ENCODE measurements at regions of chr17 and their contacts with region 1.

Region 1: GRCh38 chr17:75749545-75750389 is 15.2 kb downstream of the GALK1 start:
- DNase-seq: peak; percentile 68
- H3K4me3 Mint-ChIP-seq: no peak overlapping the region
- H3K27ac Mint-ChIP-seq: no peak overlapping the region
- H3K4me1 Mint-ChIP-seq: peaks cover 9% of the 10 kb centered on the region
- H3K27me3 Mint-ChIP-seq: no peaks in the 10 kb centered on the region
- CTCF ChIP-seq: peak; percentile 84

Region 2: DNA sequence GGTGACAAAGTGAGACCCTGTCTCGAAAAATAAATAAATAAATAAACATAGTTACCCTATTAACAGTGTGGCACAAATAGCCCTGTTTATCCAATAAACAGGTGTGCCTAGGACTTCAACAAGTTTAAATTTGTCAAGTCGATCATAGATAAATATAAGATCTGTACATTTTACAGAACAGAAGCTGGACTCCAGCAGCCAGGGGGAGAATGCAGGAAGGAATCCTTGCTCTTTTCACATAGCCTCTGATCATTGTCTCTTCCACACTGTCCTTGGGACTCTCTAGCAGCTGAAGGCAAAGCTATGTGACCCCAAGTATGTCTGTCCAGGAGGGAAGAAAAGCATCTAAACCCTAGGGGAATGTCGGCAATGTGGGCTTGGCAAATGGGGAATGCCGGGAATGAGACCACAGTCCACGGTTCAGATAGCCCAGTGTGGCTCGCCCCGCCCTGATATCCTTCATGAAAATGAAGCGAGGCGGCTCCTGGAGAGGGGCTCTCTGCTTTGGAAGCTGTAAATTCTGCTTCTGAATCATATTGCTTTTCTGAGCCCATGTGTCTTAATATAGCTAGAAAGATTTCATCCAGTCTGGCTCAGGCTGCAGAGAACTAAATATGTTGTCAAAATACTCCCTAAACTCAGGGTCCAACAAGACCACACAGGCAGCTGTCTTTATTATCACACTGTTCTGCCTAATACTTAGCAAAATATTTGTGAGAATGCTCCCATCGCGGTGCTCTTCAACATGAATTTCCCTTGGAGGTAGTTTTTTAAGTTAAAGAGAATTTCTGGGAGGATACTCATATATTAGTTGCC is 319.4 kb before region 1 on chr17:
- CTCF ChIA-PET with region 1: no interaction called
- POLR2A ChIA-PET with region 1: no interaction called
- intact Hi-C with region 1: loop called (anchors 5 kb)
- DNase-seq: no peak
- H3K4me3 Mint-ChIP-seq: no peak overlapping the region
- H3K27ac Mint-ChIP-seq: no peak overlapping the region
- H3K4me1 Mint-ChIP-seq: peaks cover 5% of the 10 kb centered on the region
- H3K27me3 Mint-ChIP-seq: no peaks in the 10 kb centered on the region
- CTCF ChIP-seq: no peak

Region 3: DNA sequence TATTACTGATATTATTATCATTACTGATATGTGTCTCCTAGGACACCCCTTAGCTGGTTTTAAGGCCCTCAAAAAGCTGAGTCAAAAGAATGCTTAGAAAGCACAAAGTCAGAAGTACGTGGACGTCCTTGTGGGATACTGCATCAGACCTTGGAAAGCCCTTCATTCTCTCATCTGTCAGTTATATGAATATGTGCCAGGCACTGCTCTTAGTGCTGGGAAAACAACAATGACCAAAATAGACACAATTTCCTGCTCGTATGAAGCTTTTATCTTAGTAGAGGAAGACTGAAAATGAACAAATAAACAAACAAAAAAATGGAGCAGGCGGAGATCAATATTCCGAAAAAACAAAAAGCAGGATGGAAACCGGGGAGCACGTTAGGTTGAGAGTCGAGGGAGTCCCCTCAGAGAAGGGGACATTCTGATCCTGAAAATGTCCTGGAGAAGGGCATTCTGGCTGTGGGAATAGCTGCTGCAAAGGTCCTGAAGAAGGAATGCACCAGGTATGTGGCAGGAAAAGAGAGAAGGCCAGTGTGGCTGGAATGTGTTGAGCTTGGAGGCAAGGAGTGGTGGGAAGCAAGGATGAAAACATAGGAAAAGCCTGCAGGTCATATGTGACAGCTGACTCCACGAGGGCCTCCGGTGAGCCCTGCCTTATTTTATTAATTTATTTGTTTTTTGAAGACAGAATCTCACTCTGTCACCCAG is 308.9 kb before region 1 on chr17:
- CTCF ChIA-PET with region 1: no interaction called
- POLR2A ChIA-PET with region 1: no interaction called
- intact Hi-C with region 1: no loop called
- DNase-seq: no peak
- H3K4me3 Mint-ChIP-seq: no peak overlapping the region
- H3K27ac Mint-ChIP-seq: peak overlapping the region; percentile 59
- H3K4me1 Mint-ChIP-seq: peaks cover 10% of the 10 kb centered on the region
- H3K27me3 Mint-ChIP-seq: no peaks in the 10 kb centered on the region
- CTCF ChIP-seq: no peak

Region 4: GRCh38 chr17:75673487-75673886 is 76.3 kb before region 1 on chr17:
- CTCF ChIA-PET with region 1: interaction called, 152 read pairs
- POLR2A ChIA-PET with region 1: interaction called, 109 read pairs
- intact Hi-C with region 1: loop called (anchors 1 kb)
- DNase-seq: no peak
- H3K4me3 Mint-ChIP-seq: no peak overlapping the region
- H3K27ac Mint-ChIP-seq: no peak overlapping the region
- H3K4me1 Mint-ChIP-seq: peaks cover 2% of the 10 kb centered on the region
- H3K27me3 Mint-ChIP-seq: no peaks in the 10 kb centered on the region
- CTCF ChIP-seq: no peak

Region 5: GRCh38 chr17:75693500-75694481 is 56.0 kb before region 1 on chr17:
- CTCF ChIA-PET with region 1: interaction called, 23 read pairs
- POLR2A ChIA-PET with region 1: interaction called, 5 read pairs
- intact Hi-C with region 1: no loop called
- DNase-seq: peak; percentile 99
- H3K4me3 Mint-ChIP-seq: peak overlapping the region; percentile 28
- H3K27ac Mint-ChIP-seq: peak overlapping the region; percentile 96
- H3K4me1 Mint-ChIP-seq: peaks cover 73% of the 10 kb centered on the region
- H3K27me3 Mint-ChIP-seq: no peaks in the 10 kb centered on the region
- CTCF ChIP-seq: no peak

Region 6: DNA sequence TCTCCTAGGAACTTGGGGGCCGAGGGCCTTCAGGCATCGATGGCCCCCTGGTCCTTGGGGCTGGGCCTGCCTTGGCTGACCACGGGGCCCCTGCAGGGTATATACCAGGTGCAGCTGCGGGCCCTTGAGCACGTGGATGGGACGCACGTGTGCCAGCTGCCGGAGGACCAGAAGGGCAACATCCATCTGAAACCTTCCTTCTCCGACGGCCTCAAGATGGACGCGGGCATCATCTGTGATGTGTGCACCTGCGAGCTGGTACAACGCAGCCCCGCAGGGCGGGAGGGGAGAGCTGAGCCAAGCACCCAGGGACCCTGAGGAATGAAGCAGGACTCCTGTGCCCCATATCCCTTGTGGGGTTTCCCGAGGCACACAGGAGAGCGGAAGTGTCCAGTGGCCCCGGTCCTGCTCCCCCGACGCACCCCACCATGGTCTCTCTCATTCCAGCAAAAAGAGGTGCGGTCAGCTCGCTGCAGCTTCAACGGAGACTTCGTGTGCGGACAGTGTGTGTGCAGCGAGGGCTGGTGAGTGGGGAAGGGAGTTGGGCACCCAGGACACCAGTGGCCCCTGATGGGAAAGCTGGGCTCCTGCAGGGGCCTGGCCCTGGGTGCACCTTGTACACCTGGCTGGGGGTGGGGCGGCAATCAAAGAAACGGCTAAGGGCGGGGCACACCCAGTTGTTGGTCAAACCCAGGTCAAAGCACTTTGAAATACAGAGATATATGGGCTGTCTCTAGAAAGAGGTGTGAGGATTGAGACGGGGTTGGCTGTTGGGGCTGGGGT is 17.9 kb before region 1 on chr17:
- CTCF ChIA-PET with region 1: interaction called, 7 read pairs
- POLR2A ChIA-PET with region 1: interaction called, 10 read pairs
- intact Hi-C with region 1: no loop called
- DNase-seq: no peak
- H3K4me3 Mint-ChIP-seq: no peak overlapping the region
- H3K27ac Mint-ChIP-seq: peak overlapping the region; percentile 73
- H3K4me1 Mint-ChIP-seq: no peaks in the 10 kb centered on the region
- H3K27me3 Mint-ChIP-seq: no peaks in the 10 kb centered on the region
- CTCF ChIP-seq: no peak

Region 7: DNA sequence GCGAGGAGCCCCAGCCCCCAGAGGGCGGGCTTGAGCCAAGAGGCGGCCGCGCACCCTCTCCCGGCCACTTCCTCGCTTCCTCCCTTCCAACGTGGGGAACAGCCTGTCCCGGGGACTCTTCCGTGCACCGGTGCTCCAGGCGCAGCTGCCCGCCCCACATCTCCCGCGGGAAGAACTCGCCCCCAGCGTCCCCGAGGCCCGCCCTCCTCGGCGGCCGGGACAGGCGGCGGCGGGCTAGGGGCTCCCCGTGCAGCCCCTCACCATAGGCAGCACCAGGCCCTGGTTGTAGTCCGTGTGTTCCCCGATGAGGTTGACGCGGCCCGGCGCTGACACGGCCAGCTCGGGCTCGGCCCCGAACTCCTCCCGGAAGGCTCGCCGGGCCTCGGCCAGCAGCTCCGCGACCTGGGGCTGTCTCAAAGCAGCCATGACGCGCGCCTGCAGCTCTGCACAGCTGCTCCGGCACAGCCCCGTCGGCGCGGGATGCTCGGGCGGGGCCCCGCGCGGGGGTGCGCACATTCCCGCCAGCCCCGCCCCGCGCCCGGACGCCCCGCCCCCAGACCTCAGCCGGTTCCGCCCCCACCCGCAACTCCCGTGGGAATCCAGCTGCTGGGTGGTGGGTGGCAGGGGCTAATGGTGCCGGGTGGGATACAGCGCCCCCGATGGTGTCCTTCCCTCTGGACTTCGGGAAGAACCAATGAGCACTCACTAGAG is 15.1 kb after region 1 on chr17 and contains the start of gene GALK1:
- CTCF ChIA-PET with region 1: interaction called, 16 read pairs
- POLR2A ChIA-PET with region 1: interaction called, 7 read pairs
- intact Hi-C with region 1: no loop called
- DNase-seq: peak; percentile 69
- H3K4me3 Mint-ChIP-seq: peak within 1 kb of the TSS; percentile 69
- H3K27ac Mint-ChIP-seq: peak within 1 kb of the TSS; percentile 35
- H3K4me1 Mint-ChIP-seq: peaks cover 15% of the 10 kb centered on the region
- H3K27me3 Mint-ChIP-seq: no peaks in the 10 kb centered on the region
- CTCF ChIP-seq: peak; percentile 53
- total RNA-seq, gene GALK1: 8.7 and 9.8 TPM in 2 replicates

Region 8: DNA sequence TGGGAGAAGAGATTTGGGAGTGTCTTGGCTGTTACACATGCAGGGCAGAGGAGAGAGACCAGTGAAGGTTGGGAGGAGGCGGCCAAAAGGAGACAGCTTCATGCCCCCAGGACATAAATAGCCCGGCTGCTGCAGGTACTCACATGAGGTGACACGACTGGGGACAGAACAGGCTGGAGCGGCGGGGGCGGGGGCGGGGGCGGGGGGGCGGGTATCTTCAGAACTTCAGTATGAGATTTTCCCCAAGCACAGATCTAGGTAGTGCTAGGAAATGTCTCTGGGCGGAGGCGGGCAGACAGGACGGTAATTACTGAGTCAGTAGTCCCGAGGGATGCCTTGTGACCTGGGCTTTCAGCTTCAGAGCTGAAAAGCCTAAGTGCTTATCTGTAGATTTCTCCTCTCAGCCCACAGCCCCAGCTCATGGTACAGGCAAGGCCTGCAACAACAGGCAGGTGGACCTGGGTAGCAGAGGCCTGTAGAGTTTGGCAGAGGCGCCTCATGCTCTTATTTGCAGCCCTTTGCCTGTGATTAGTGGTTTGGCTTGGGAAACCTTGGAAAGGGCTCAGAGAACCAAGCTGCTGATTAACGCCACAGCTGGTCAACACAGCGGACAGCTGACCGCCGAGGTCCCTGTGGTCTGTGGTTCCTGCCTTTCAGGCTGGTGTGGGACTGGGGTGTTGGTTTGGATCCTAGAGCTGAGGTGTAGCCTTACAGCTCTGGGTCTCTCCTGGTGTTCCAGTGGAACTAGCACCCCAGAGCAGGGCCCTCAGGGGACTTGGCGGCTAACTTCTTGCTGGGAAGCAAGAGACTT is 59.3 kb after region 1 on chr17:
- CTCF ChIA-PET with region 1: no interaction called
- POLR2A ChIA-PET with region 1: no interaction called
- intact Hi-C with region 1: no loop called
- DNase-seq: peak; percentile 17
- H3K4me3 Mint-ChIP-seq: no peak overlapping the region
- H3K27ac Mint-ChIP-seq: no peak overlapping the region
- H3K4me1 Mint-ChIP-seq: peaks cover 11% of the 10 kb centered on the region
- H3K27me3 Mint-ChIP-seq: no peaks in the 10 kb centered on the region
- CTCF ChIP-seq: no peak

Region 9: DNA sequence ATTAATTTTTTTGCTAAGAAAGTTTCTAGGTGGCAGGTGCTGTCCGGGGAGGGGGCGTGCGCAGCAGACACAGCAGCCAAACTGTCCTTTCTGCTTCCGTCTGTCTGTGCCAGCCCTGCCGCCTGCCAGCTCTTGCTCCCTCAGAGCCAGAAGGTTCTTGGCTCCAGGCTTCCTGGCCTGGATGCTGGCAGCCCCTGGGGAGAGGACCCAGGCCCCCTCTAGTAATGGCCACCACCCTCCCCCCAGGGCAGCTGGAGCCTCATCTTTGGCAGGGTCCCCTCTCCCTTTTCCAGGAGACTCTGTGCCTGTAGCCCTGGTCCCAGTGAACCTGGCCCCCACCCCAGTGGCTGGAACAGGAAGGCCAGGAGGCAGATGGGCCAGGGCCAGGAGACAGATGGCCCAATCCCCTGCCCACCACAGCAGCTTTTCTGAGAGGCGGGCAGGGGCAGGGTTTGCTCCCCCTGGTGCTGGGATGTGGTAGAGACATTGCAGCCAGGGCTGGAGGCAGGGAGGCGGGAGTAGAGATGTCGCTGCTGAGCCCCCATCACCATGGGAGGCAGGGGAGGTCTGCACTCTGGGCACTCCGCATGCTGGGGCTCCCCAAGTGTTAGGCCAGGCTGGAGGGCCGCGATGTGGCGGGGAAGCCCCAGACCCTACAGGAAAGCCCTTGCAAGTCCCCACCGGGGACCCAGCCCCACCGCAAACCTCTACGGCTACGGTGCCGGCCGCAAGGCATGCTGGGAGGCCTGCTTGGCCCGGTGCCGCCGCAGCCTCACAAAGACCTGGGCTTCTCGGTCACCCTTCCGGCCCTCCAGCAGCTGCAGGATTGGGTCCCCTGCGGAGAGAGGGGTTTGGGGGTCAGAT is 77.7 kb after region 1 on chr17:
- CTCF ChIA-PET with region 1: no interaction called
- POLR2A ChIA-PET with region 1: no interaction called
- intact Hi-C with region 1: no loop called
- DNase-seq: peak; percentile 37
- H3K4me3 Mint-ChIP-seq: no peak overlapping the region
- H3K27ac Mint-ChIP-seq: no peak overlapping the region
- H3K4me1 Mint-ChIP-seq: peaks cover 6% of the 10 kb centered on the region
- H3K27me3 Mint-ChIP-seq: no peaks in the 10 kb centered on the region
- CTCF ChIP-seq: peak; percentile 51